Naive thymus-derived CD4-positive, alpha-beta T cell (primary cell): ENCODE measurements at regions of chr19 and their contacts with region 1.

Region 1: DNA sequence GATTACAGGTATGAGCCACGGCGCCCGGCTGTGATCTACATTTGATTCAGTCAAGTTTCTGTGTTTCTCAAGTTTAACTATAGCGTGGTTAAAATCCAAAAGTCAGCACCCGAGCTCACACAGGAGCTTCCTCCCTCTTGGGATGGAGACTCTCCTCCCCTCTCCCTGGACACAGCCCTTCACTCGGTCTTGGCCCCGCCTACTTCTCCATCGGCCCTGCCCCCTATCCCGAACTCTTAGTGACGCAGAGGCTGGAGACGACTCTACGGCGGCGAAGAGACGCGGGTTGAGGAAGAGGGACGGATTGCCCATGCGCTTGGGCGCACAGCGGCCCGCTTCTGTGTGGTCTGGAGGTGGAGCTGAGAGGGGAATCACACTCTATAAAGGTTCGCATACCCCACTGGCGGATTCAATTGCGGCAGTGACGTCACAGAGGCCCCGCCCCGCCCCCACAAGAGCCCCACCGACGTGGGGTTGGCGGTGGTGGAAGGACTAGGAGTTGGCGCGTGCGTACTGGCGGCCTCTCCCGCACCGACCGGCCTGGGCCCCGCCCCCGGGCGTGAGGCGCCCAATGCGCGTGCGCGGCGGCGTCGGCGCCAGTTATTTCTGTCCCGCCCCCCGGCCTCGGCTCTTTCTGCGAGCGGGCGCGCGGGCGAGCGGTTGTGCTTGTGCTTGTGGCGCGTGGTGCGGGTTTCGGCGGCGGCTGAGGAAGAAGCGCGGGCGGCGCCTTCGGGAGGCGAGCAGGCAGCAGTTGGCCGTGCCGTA is at the start of gene TRIM28:
- DNase-seq: peak; percentile 100
- ATAC-seq: peak; percentile 92
- H3K4me3 ChIP-seq: peak within 1 kb of the TSS; percentile 97
- H3K4me3 Mint-ChIP-seq: peak within 1 kb of the TSS; percentile 94 to 99 (median 96)
- H3K27ac ChIP-seq: peak within 1 kb of the TSS; percentile 83
- H3K27ac Mint-ChIP-seq: peak within 1 kb of the TSS; percentile 96 to 100 (median 99)
- H3K4me1 ChIP-seq: peaks cover 16% of the 10 kb centered on the region in 2 donors
- H3K4me1 Mint-ChIP-seq: peaks cover 28 to 43% (median 36%) of the 10 kb centered on the region in 7 donors
- H3K27me3 ChIP-seq: no peaks in the 10 kb centered on the region
- H3K27me3 Mint-ChIP-seq: peaks cover 0 to 33% (median 0%) of the 10 kb centered on the region in 5 donors
- total RNA-seq, gene TRIM28: 396 to 564 (median 435) TPM

Region 2: GRCh38 chr19:58338825-58339558 is 205.0 kb before region 1 on chr19:
- CTCF ChIA-PET with region 1: no interaction called
- POLR2A ChIA-PET with region 1: no interaction called
- intact Hi-C with region 1: no loop called
- DNase-seq: no peak
- ATAC-seq: no peak
- H3K4me3 ChIP-seq: no peak overlapping the region
- H3K4me3 Mint-ChIP-seq: no peak overlapping the region
- H3K27ac ChIP-seq: no peak overlapping the region
- H3K27ac Mint-ChIP-seq: no peak overlapping the region
- H3K4me1 ChIP-seq: no peaks in the 10 kb centered on the region
- H3K4me1 Mint-ChIP-seq: peaks cover 0 to 13% (median 4%) of the 10 kb centered on the region in 7 donors
- H3K27me3 ChIP-seq: no peaks in the 10 kb centered on the region
- H3K27me3 Mint-ChIP-seq: no peaks in the 10 kb centered on the region

Region 3: GRCh38 chr19:58475714-58476497 is 68.1 kb before region 1 on chr19 and contains the start of gene ZNF446:
- CTCF ChIA-PET with region 1: no interaction called
- POLR2A ChIA-PET with region 1: interaction called, 4 read pairs
- intact Hi-C with region 1: loop called (anchors 1 kb)
- DNase-seq: peak; percentile 84 to 97 (median 96)
- ATAC-seq: peak; percentile 92
- H3K4me3 ChIP-seq: peak within 1 kb of the TSS; percentile 77
- H3K4me3 Mint-ChIP-seq: peak within 1 kb of the TSS; percentile 78 to 99 (median 96)
- H3K27ac ChIP-seq: peak within 1 kb of the TSS; percentile 91
- H3K27ac Mint-ChIP-seq: peak within 1 kb of the TSS; percentile 87 to 100 (median 99)
- H3K4me1 ChIP-seq: peaks cover 14 to 16% of the 10 kb centered on the region in 2 donors
- H3K4me1 Mint-ChIP-seq: peaks cover 6 to 29% (median 17%) of the 10 kb centered on the region in 7 donors
- H3K27me3 ChIP-seq: no peaks in the 10 kb centered on the region
- H3K27me3 Mint-ChIP-seq: no peaks in the 10 kb centered on the region
- total RNA-seq, gene ZNF446: 9.5 to 20.0 (median 15.1) TPM

Region 4: GRCh38 chr19:58513694-58514563 is 30.1 kb before region 1 on chr19:
- CTCF ChIA-PET with region 1: interaction called, 3 read pairs
- POLR2A ChIA-PET with region 1: interaction called, 59 read pairs
- intact Hi-C with region 1: loop called (anchors 1 kb)
- DNase-seq: peak; percentile 91 to 99 (median 95)
- ATAC-seq: peak; percentile 98
- H3K4me3 ChIP-seq: peak overlapping the region; percentile 39
- H3K4me3 Mint-ChIP-seq: peak overlapping the region; percentile 73 to 93 (median 84)
- H3K27ac ChIP-seq: peak overlapping the region; percentile 65
- H3K27ac Mint-ChIP-seq: peak overlapping the region; percentile 67 to 94 (median 85)
- H3K4me1 ChIP-seq: peaks cover 17 to 21% of the 10 kb centered on the region in 2 donors
- H3K4me1 Mint-ChIP-seq: peaks cover 17 to 40% (median 27%) of the 10 kb centered on the region in 7 donors
- H3K27me3 ChIP-seq: no peaks in the 10 kb centered on the region
- H3K27me3 Mint-ChIP-seq: no peaks in the 10 kb centered on the region

Region 5: GRCh38 chr19:58558623-58559274 is 14.7 kb after region 1 on chr19:
- CTCF ChIA-PET with region 1: no interaction called
- POLR2A ChIA-PET with region 1: interaction called, 85 read pairs
- intact Hi-C with region 1: loop called (anchors 1 kb)
- DNase-seq: peak; percentile 99 to 100 (median 100)
- ATAC-seq: peak; percentile 79
- H3K4me3 ChIP-seq: peak overlapping the region; percentile 97
- H3K4me3 Mint-ChIP-seq: peak overlapping the region; percentile 87 to 98 (median 96)
- H3K27ac ChIP-seq: peak overlapping the region; percentile 97
- H3K27ac Mint-ChIP-seq: peak overlapping the region; percentile 93 to 99 (median 98)
- H3K4me1 ChIP-seq: peaks cover 51 to 63% of the 10 kb centered on the region in 2 donors
- H3K4me1 Mint-ChIP-seq: peaks cover 18 to 86% (median 77%) of the 10 kb centered on the region in 7 donors
- H3K27me3 ChIP-seq: no peaks in the 10 kb centered on the region
- H3K27me3 Mint-ChIP-seq: peaks cover 0 to 4% (median 0%) of the 10 kb centered on the region in 5 donors

Region 6: GRCh38 chr19:58572818-58573657 is 29.0 kb after region 1 on chr19 and contains the start of gene MZF1:
- CTCF ChIA-PET with region 1: no interaction called
- POLR2A ChIA-PET with region 1: interaction called, 10 read pairs
- intact Hi-C with region 1: loop called (anchors 1 kb)
- DNase-seq: peak; percentile 97 to 100 (median 100)
- ATAC-seq: peak; percentile 81
- H3K4me3 ChIP-seq: peak within 1 kb of the TSS; percentile 71
- H3K4me3 Mint-ChIP-seq: peak within 1 kb of the TSS; percentile 82 to 100 (median 98)
- H3K27ac ChIP-seq: peak within 1 kb of the TSS; percentile 97
- H3K27ac Mint-ChIP-seq: peak within 1 kb of the TSS; percentile 97 to 100 (median 100)
- H3K4me1 ChIP-seq: peaks cover 19 to 20% of the 10 kb centered on the region in 2 donors
- H3K4me1 Mint-ChIP-seq: peaks cover 27 to 50% (median 33%) of the 10 kb centered on the region in 7 donors
- H3K27me3 ChIP-seq: no peaks in the 10 kb centered on the region
- H3K27me3 Mint-ChIP-seq: peaks cover 0 to 4% (median 0%) of the 10 kb centered on the region in 5 donors
- total RNA-seq, gene MZF1: 35.0 to 51.8 (median 44.9) TPM

Region 7: DNA sequence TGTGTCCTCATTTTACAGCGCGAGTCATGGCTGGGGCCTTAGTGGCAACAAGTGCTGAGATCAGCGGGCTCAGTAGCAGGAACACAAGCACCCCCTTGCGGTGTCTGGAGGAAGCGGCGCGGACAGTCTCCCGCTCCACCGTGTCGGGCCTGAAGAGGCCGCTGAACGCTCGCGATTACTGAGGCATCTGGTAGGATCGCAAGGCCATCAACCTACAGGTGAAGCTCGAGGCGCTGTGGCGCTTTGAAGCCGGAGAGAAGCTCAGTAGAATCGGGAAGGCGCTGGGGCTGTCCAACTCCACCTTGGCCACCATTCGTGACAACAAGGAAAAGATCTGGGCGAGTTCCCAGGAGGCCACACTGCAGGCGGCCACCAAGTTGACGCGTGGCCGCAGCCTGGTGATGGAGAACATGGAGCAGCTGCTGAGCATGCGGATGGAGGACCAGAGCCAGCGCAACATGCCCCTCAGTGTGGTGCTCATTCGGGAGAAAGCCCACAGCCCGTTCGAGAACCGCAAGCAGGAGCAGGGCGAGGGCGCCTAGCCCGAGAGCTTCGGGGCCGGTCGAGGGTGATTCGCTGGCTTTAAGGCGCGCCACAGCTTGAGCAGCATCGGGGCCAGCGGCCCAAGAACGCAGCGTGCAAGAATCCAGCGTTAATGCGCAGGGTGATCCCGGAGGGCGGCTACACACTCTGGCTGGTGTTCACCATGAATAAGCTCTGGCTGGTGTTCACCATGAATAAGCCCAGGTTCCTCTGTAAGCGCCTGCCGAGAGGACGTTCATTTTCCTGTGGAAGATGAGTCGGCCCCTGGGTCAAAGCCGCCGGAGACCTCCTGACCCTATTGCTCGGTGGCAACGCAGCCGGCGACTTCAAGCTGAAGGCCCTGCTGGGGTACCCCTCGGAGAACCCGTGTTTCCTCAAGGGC is 37.5 kb after region 1 on chr19:
- CTCF ChIA-PET with region 1: interaction called, 5 read pairs
- POLR2A ChIA-PET with region 1: interaction called, 8 read pairs
- intact Hi-C with region 1: loop called in 1 of 2 experiments (anchors 1 kb)
- DNase-seq: peak; percentile 81 to 91 (median 89)
- ATAC-seq: peak; percentile 100
- H3K4me3 ChIP-seq: no peak overlapping the region
- H3K4me3 Mint-ChIP-seq: peak overlapping the region in 1 of 10 donors; percentile 38
- H3K27ac ChIP-seq: peak overlapping the region; percentile 48
- H3K27ac Mint-ChIP-seq: peak overlapping the region; percentile 7 to 90 (median 78)
- H3K4me1 ChIP-seq: peaks cover 0 to 7% of the 10 kb centered on the region in 2 donors
- H3K4me1 Mint-ChIP-seq: peaks cover 12 to 29% (median 24%) of the 10 kb centered on the region in 7 donors
- H3K27me3 ChIP-seq: no peaks in the 10 kb centered on the region
- H3K27me3 Mint-ChIP-seq: no peaks in the 10 kb centered on the region